Transverse colon (tissue), 4 donors: ENCODE measurements at regions of chr3 and their contacts with region 1.

Region 1: DNA sequence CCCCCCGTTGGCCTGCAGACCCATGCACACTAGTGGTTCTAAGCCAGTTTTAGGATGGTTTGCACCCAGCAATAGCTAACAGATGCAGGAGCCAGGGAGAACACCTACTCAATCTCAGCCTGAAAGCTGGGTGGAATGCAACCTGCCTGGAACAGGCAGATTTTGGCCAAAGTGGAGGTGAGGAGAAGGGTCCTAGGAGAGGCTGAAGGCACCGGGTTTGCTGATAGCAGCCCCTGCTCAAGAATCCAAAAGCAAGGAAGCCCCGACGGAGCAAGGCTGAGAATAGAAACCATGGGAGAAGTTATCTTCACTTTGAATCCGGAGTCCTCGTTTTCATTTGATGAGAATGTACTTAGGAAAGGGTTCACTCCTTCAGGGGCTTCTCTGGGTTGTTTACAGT is 9.9 kb downstream of the RRP9 start:
- DNase-seq: no peak
- H3K4me3 ChIP-seq: no peak overlapping the region
- H3K27ac ChIP-seq: no peak overlapping the region
- H3K4me1 ChIP-seq: no peaks in the 10 kb centered on the region
- H3K27me3 ChIP-seq: no peaks in the 10 kb centered on the region
- CTCF ChIP-seq: no peak
- EP300 ChIP-seq: no peak
- POLR2A ChIP-seq: no peak

Region 2: DNA sequence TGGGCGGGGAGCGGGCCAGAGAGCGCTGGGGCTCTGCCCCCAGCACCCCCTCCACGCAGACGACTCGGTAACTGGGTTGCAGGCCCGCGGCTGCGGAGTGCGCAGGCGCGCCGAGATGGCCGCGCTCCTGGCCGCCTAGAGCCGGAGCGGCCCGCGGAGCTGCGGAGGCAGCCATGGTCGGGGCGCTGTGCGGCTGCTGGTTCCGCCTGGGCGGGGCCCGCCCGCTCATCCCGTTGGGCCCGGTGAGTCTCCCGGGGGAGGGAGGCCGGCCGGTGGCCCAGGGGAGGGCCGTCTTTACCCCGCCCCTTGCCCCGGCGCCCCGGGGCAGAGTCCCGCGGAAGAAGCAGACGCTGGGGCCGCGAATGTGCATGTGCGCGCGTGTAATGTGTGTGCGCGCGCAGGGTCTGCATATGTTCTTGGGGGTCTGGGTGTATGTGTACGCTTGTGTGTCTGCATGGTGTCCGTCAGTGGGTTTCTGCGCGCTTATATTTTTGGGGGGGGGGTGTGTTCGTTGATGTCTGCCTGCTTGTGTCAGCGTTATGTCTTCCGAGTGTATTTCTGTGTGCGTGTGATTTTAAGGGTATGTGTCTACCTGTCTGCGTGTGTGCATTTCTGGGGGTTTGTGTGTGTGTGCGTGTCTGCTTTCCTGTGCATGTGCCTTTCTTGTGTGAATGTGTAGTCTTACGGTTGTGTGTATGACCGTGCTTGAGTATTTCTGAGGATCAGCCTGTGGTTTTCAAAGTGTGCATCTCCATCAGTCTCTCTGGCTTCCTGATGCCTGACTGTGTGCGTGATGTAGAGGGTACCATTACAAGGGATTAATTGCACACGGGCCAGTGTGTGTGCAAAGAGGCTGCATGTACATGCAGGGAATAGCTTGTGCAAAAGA is 43.5 kb after region 1 on chr3 and contains the start of gene ABHD14A:
- in situ Hi-C with region 1: no loop called
- intact Hi-C with region 1: loop called (anchors 1 kb)
- DNase-seq: peak; percentile 88
- H3K4me3 ChIP-seq: peak within 1 kb of the TSS; percentile 59 to 82 (median 62)
- H3K27ac ChIP-seq: peak within 1 kb of the TSS; percentile 95 to 97 (median 96)
- H3K4me1 ChIP-seq: peaks cover 6 to 32% (median 23%) of the 10 kb centered on the region in 4 donors
- H3K27me3 ChIP-seq: no peaks in the 10 kb centered on the region
- CTCF ChIP-seq: no peak
- EP300 ChIP-seq: no peak
- POLR2A ChIP-seq: peak; percentile 85
- total RNA-seq, gene ABHD14A: 2.0 to 11.3 (median 7.7) TPM